H1 (cell line): ENCODE measurements at regions of chr7 and their contacts with region 1.

Region 1: GRCh38 chr7:102272075-102272917 is 14.4 kb upstream of the SH2B2 start:
- DNase-seq: peak; percentile 43 to 95
- H3K4me3 ChIP-seq: no peak overlapping the region
- H3K27ac ChIP-seq: no peak overlapping the region
- H3K4me1 ChIP-seq: peaks cover 0 to 3% (median 0%) of the 10 kb centered on the region in 4 experiments; a peak in 1 of 7 replicates
- H3K27me3 ChIP-seq: no peaks in the 10 kb centered on the region
- CTCF ChIP-seq: peak in 2 of 3 experiments; percentile 90 to 98; a peak in 3 of 4 replicates
- EP300 ChIP-seq: no peak
- POLR2A ChIP-seq: no peak
- RAD21 ChIP-seq: peak; percentile 97

Region 2: DNA sequence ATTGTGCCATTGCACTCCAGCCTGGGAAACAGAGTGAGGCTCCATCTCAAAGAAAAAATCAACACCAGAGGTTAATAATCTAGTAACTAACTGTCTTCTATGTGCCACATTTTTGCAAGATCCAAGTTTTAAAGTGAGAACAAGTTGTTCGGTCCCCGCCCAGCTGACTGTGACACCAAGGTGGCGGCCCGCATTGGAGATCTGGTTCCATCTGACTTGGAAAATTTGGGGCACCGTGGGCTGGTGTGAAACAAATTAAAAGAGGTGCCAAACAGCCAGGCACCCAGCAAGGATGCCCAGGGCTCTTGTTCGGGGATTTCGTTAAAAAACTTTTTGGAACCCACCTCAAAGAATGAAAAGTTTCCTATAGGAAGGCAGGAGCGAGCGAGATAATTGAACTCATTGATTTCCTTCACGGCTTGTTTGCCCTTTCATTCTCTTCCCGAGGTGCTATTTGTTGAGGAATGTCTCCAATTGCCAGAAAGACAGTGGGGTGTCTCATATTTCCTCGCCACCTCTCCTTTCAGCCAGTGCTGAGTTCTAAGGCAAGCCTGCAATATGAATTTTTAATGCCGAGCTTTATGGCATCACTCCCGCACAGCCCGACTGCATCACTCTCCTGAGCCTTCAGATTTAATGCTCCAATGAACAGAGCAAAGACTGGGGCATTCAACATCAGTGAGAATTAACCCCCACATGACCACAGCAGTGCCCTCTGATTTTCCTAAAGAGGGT is 142.5 kb before region 1 on chr7:
- CTCF ChIA-PET with region 1: no interaction called
- POLR2A ChIA-PET with region 1: no interaction called
- DNase-seq: no peak
- H3K4me3 ChIP-seq: no peak overlapping the region
- H3K27ac ChIP-seq: no peak overlapping the region
- H3K4me1 ChIP-seq: peaks cover 3 to 7% (median 5%) of the 10 kb centered on the region in 4 experiments
- H3K27me3 ChIP-seq: no peaks in the 10 kb centered on the region
- CTCF ChIP-seq: no peak
- EP300 ChIP-seq: no peak
- POLR2A ChIP-seq: no peak
- RAD21 ChIP-seq: no peak

Region 3: DNA sequence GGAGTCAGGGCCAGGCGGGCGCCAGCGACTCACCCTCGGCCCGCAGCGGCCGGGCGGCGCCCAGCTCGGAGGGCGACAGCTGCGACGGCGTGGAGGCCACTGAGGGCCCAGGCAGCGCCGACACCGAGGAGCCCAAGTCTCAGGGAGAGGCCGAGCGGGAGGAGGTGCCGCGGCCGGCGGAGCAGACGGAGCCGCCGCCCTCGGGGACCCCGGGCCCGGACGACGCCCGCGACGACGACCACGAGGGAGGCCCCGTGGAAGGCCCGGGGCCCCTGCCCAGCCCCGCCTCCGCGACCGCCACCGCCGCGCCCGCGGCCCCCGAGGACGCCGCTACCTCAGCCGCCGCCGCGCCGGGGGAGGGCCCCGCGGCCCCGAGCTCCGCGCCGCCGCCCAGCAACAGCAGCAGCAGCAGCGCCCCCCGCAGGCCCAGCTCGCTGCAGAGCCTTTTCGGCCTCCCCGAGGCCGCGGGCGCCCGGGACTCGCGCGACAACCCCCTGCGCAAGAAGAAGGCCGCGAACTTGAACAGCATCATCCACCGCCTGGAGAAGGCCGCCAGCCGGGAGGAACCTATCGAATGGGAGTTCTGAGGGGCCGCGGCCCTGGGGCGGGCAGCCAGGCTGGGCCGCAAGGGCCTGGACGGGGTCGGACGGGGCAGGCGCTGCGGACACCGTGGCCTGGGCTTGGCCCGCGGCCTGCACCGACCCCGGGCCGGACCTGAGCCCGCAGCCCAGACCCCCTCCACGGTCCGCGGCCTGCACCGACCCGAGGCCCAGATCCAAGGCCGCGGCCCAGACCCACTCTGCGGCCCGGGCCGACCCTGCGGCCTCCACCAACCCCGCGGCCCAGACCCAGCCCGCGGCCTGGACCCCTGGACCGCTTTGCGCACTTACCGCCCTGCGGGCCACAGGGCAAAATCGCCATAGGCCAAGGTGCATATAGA is 23.6 kb before region 1 on chr7:
- CTCF ChIA-PET with region 1: interaction called, 20 read pairs
- POLR2A ChIA-PET with region 1: interaction called, 4 read pairs
- DNase-seq: peak; percentile 36 to 88
- H3K4me3 ChIP-seq: peak overlapping the region in 2 of 4 experiments; percentile 3 to 52; a peak in 5 of 8 replicates
- H3K27ac ChIP-seq: no peak overlapping the region
- H3K4me1 ChIP-seq: peaks cover 0 to 10% (median 0%) of the 10 kb centered on the region in 4 experiments; a peak in 5 of 7 replicates
- H3K27me3 ChIP-seq: no peaks in the 10 kb centered on the region
- CTCF ChIP-seq: peak; percentile 59 to 64 (median 61)
- EP300 ChIP-seq: no peak
- POLR2A ChIP-seq: no peak
- RAD21 ChIP-seq: peak; percentile 17 to 54; a peak in 3 of 4 replicates